Activated CD4-positive, alpha-beta memory T cell treated with anti-CD3 and anti-CD28 coated beads for 36 hours (primary cell): ENCODE measurements at regions of chr17 and their contacts with region 1.

Region 1: GRCh38 chr17:48636177-48637018 is 10.2 kb upstream of the HOXB9 start:
- DNase-seq: peak; percentile 85
- H3K4me3 Mint-ChIP-seq: peak overlapping the region; percentile 13
- H3K27ac Mint-ChIP-seq: no peak overlapping the region
- H3K4me1 Mint-ChIP-seq: peaks cover 4% of the 10 kb centered on the region
- H3K27me3 Mint-ChIP-seq: peaks cover 76% of the 10 kb centered on the region

Region 2: GRCh38 chr17:48550502-48551213 is 85.7 kb before region 1 on chr17:
- CTCF ChIA-PET with region 1: no interaction called
- POLR2A ChIA-PET with region 1: no interaction called
- intact Hi-C with region 1: no loop called
- DNase-seq: no peak
- H3K4me3 Mint-ChIP-seq: no peak overlapping the region
- H3K27ac Mint-ChIP-seq: no peak overlapping the region
- H3K4me1 Mint-ChIP-seq: peaks cover 27% of the 10 kb centered on the region
- H3K27me3 Mint-ChIP-seq: peaks cover 2% of the 10 kb centered on the region

Region 3: DNA sequence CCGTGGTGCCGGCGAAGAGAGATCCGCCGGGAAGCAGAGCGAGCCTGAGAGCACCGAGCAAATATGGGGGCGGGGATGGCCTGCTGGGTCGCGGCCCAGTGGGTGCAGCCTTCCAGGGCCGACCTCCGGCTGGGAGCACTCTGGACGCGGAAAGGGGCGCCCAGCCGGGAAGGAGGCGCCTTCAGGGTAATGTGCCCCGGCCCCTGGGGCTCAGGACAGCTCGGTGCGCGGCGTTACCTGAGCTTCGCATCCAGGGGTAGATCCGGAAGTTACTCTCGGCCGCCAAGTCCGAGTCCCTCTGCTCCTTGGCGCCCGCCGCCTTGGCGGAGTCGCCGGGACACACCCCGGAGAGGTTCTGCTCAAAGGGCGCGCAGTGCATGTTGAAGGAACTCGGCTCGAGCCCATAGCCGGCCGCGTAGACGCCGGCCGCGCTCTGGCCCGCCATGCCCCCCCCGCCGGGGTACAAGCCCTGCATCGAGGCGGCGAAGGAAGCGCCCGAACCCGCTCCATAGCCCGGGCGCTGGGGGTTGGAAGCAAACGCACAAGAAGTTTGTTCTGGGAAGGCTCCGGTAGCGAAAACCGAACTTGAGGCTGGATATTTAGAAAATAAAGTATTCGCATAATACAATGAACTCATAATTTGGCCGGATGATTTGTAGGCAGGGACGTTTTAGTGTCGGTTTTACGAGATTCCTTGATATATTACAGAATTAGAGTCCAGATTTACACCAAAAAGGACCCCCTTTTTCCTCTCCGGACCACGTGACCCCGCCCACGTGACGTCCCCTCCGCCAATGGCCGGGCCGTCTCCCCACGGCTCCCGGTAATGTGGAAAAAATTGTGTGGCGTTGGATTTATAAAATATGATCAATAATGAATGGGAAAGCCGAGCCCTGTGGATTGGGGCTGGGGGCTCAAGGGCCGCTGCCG is 25.9 kb before region 1 on chr17 and contains the start of gene HOXB7:
- CTCF ChIA-PET with region 1: interaction called, 19 read pairs
- POLR2A ChIA-PET with region 1: no interaction called
- intact Hi-C with region 1: no loop called
- DNase-seq: peak; percentile 78
- H3K4me3 Mint-ChIP-seq: peak within 1 kb of the TSS; percentile 86
- H3K27ac Mint-ChIP-seq: peak within 1 kb of the TSS; percentile 41
- H3K4me1 Mint-ChIP-seq: peaks cover 37% of the 10 kb centered on the region
- H3K27me3 Mint-ChIP-seq: peaks cover 64% of the 10 kb centered on the region
- total RNA-seq, gene HOXB7: 0.36 to 0.44 TPM

Region 4: DNA sequence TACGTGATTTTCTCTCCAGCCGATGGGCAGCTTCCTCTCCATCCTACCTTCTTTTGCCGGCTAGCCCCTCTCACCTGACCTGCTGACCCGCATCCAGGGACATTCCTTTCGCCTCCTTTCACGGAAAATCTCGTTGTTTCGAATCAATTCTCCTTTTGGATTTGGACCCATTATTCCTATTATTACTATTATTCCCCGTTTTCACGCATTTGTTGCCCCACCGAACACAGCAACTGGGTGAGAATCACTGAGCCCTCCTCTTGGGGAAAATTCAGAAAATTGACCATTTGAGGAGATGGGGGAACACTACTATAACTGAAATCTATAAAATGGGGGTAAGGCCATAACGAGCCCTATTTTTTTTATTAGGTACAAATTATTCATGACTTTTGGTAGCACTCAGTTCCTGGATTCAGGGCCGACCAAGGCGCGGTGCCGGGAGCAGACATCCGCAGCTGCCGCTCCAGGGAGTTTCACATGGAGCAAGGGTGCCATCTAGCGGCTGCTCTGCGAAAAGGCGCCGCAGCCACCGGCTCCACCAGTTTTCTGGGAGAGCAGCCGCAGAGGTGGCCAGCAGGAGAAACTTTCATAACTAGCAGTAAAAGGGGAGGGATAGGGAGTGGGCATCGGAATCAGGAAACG is 18.0 kb before region 1 on chr17:
- CTCF ChIA-PET with region 1: interaction called, 19 read pairs
- POLR2A ChIA-PET with region 1: no interaction called
- intact Hi-C with region 1: no loop called
- DNase-seq: peak; percentile 89
- H3K4me3 Mint-ChIP-seq: peak overlapping the region; percentile 17
- H3K27ac Mint-ChIP-seq: peak overlapping the region; percentile 40
- H3K4me1 Mint-ChIP-seq: peaks cover 42% of the 10 kb centered on the region
- H3K27me3 Mint-ChIP-seq: peaks cover 89% of the 10 kb centered on the region

Region 5: DNA sequence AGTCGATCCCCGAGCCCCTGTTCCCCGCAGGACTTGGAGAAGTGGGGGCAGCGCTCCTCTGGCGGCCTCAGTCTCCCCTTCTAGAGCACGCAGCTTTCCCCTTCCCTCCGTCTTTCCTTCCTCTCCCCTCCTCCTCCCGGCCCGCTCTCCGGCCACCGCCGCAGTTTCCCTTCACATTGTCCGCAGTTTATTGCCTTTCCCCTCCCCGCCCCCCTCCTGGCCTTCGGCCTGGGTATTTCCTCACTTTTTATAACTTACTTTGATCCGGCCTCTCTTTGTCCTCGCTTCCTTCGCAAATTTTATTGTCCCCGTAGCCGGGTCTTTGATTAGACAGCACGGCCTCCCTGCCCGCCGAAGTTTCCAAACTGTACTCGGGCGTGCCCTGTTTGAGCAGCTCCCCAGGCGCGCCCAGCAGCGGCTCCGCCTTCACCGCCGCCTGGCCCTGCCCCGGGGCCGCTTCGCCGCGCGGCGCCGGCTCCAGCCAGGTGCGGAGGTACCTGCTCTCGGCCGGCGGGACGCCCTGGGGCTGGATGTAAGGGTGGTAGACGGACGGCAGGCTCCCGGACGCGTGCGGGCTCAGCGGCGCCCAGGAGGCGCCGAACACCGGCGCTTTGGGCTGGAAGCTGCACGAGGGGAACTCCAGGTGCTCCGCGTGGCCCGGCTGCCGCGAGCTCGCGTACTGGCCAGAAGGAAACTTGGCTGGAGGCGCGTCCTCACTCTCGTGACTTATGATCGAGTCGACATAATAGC is 10.7 kb before region 1 on chr17:
- CTCF ChIA-PET with region 1: interaction called, 50 read pairs
- POLR2A ChIA-PET with region 1: interaction called, 3 read pairs
- intact Hi-C with region 1: no loop called
- DNase-seq: peak; percentile 54
- H3K4me3 Mint-ChIP-seq: peak overlapping the region; percentile 72
- H3K27ac Mint-ChIP-seq: no peak overlapping the region
- H3K4me1 Mint-ChIP-seq: peaks cover 8% of the 10 kb centered on the region
- H3K27me3 Mint-ChIP-seq: peaks cover 75% of the 10 kb centered on the region

Region 6: DNA sequence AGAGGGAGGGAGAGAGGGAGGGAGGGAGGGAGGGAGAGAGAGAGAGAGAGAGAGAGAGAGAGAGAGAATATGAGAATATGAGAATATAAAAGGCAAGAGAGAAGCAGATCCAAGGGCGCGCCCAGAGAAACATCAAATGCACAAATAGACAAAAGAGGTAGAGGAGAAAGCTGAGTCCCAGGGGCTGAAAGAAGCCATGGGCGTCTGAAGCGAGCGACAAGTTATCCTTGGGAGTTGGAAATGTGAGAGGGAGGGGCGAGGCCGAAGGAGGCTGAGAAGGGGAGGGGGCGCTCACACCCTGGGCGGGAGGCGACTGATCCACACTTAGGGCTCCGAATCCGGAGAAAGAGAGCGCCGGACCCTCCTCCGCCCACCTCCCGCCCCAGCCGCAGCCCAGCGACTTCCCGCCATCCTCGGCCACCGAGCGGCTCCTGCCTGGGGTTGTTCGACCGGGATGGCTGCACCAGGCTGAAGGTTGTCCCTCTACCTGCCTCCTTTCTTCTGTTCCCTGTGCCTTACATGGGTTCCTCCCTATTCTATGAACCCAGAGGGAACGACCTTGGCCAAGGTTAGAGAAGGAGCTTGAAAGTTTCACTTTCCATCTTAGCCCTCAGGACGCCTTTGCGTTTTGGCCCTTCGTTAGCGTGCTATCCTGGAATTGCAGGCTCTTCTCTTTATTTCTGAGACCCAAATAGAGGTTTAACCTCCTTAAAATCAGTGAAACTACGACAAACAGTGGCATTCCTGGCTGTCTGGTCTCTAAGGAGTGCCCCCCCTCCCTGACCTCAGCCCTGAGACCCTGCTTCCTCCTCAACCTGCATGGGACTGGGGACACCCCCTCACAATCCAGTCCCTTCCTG is 10.9 kb after region 1 on chr17:
- CTCF ChIA-PET with region 1: interaction called, 16 read pairs
- POLR2A ChIA-PET with region 1: no interaction called
- intact Hi-C with region 1: no loop called
- DNase-seq: no peak
- H3K4me3 Mint-ChIP-seq: peak overlapping the region; percentile 41
- H3K27ac Mint-ChIP-seq: no peak overlapping the region
- H3K4me1 Mint-ChIP-seq: peaks cover 11% of the 10 kb centered on the region
- H3K27me3 Mint-ChIP-seq: peaks cover 54% of the 10 kb centered on the region

Region 7: DNA sequence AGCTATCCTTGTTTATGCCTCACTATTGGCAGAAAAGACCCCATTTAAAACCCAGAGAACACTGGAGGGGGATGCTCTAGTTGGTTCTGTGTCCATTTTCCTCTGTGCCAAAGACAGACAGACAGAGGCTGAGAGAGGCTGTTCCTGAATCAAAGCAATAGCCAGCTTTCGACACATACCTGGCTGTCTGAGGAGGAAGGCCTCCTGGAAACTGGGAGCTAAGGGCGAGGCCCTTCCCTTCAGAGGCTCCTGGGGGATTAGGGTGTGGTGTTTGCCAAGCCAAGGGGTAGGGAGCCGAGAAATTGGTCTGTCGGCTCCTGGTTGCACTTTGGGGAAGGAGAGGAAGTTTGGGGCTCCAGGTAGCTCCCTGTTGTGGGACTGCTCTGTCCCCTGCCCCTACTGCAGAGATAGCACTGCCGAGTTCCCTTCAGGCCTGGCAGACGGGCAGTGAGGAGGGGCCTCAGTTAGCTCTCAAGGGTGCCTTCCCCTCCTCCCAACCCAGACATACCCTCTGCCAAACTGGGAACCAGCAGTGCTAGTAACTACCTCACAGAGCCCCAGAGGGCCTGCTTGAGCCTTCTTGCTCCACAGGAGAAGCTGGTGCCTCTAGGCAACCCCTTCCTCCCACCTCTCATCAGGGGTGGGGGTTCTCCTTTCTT is 416.9 kb after region 1 on chr17:
- CTCF ChIA-PET with region 1: no interaction called
- POLR2A ChIA-PET with region 1: no interaction called
- intact Hi-C with region 1: no loop called
- DNase-seq: no peak
- H3K4me3 Mint-ChIP-seq: no peak overlapping the region
- H3K27ac Mint-ChIP-seq: no peak overlapping the region
- H3K4me1 Mint-ChIP-seq: peaks cover 6% of the 10 kb centered on the region
- H3K27me3 Mint-ChIP-seq: peaks cover 4% of the 10 kb centered on the region